Colonic mucosa (tissue), 4 donors: ENCODE measurements at regions of chr1 and their contacts with region 1.

Region 1: DNA sequence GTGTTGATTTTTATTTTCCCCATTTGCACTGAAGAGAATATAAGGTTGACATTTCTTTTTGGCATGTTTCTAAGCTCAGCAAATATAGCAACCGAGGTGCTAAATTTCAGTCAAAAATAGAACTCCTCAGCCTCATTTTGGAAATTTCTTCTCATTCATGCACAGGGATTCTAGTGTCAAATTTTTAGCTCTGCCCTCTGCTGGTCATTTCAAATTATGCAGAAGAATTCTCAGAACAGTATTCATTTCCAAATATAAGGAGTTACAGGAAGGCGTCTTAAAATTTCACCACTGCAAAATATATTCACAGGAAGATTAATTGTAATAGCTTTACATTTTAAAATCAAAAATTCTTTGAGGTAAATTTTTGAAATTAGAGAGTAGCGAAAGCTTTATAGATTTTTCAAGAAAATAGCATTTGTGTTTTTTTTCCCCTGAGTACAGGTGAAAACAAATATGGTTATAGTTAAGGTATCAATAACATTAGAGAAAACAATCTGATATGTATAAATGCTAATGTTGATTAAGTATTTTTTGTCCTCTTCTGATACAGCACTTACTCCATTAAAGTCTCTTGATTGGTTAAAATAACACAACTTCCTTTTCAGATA is 57.9 kb downstream of the FMN2 start:
- DNase-seq: peak; percentile 27
- H3K4me3 ChIP-seq: no peak overlapping the region
- H3K27ac ChIP-seq: no peak overlapping the region
- H3K4me1 ChIP-seq: no peaks in the 10 kb centered on the region
- H3K27me3 ChIP-seq: no peaks in the 10 kb centered on the region
- CTCF ChIP-seq: peak; percentile 51

Region 2: DNA sequence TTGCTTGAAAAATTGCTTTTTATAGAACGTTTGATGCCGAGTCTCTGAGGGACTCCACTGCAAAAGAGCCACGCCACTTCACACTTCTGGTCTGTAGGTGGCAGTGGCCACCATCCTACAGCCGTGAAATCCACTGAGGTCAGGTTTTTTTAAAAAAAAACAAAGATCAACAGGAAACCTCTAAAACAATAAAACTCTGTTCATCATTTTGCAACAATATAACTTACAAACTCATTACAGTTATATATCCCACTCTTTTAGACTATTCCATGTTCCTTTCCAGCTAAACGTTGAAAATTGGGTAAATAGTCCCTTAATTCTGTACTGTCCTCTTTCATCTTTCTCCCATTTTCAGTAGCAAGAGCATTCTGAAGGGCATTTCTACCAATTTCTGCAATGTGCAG is 122.5 kb before region 1 on chr1:
- intact Hi-C with region 1: loop called (anchors 5 kb)
- DNase-seq: peak; percentile 43
- H3K4me3 ChIP-seq: no peak overlapping the region
- H3K27ac ChIP-seq: no peak overlapping the region
- H3K4me1 ChIP-seq: no peaks in the 10 kb centered on the region
- H3K27me3 ChIP-seq: no peaks in the 10 kb centered on the region
- CTCF ChIP-seq: peak; percentile 92